ENCODE measurements at regions of chr1 and their contacts with region 1.

Region 1: GRCh38 chr1:161192476-161193465 is 6.1 kb downstream of the ADAMTS4 start:
- DNase-seq: peak; percentile 67 to 88 (median 78)
- H3K4me3 ChIP-seq: no peak overlapping the region
- H3K27ac ChIP-seq: peak overlapping the region in 2 of 5 donors; percentile 5 to 50
- H3K4me1 ChIP-seq: peaks cover 0 to 36% of the 10 kb centered on the region in 2 donors
- H3K27me3 ChIP-seq: no peaks in the 10 kb centered on the region
- CTCF ChIP-seq: peak; percentile 73 to 90 (median 87)
- POLR2A ChIP-seq: no peak

Region 2: DNA sequence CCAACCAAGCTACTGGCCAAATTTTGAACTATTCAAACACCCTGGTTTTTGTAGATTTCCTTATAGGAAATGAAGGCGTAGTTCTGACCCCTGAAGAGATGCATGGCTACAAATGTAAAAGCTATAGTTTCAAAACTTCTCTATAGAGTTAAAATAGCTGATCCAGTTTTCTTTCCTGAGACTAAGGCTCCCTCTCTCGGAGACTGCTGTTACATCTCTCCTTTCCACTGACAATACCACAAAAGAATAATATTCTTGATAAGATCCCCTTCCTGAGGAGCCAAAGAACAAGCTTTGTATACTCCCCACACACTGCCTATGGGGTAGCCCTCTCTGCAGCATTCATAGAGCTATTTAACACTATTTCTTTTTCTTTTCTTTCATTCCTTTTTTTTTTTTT is 181.6 kb after region 1 on chr1:
- intact Hi-C with region 1: loop called in 1 of 2 experiments (anchors 10 kb)
- DNase-seq: peak in 1 of 7 donors; percentile 1
- H3K4me3 ChIP-seq: no peak overlapping the region
- H3K27ac ChIP-seq: no peak overlapping the region
- H3K4me1 ChIP-seq: no peaks in the 10 kb centered on the region
- H3K27me3 ChIP-seq: no peaks in the 10 kb centered on the region
- CTCF ChIP-seq: peak in 5 of 6 experiments; percentile 10 to 42 (median 25)
- POLR2A ChIP-seq: no peak

Region 3: DNA sequence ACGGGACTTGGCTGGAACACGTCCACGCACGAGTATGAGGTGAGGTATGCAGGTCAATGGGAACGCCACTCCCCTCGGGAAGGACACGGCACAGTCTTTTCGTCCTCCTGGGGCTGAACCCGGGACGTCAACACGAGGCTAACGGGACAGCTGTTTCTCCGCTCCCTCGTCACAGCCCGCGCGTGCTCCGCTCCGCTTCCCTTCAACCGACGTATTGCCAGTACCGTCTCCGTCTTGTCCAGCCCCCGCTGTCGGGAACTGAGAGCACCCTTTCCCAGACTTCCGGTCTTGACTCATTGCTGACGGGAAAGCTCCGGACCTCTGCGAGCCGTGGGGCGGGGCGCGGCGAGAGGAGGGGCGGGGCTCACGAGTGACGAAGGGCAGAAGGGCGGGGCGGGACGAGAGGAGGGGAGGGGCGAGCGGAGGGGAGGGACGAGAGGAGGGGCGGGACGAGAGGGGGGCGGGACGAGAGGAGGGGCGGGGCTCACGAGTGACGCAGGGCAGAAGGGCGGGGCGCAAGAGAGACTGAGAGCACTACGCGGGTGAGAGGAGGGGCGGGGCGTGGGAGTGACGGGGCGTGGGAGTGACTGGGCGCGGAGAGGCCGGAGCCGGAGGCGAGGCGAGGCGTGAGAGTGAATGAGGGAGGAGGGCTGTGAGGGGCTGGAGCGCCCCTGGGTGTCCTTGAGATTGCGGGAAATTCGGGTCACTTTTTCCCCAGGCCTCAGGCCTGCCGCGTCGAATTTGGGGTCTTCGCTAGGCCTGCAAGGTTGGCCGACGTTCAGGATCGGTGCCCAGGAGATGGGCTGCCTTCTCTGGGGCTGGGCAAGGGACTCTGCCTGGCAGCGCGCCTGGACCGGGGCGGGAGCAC is 197.2 kb after region 1 on chr1:
- intact Hi-C with region 1: loop called in 1 of 2 experiments (anchors 10 kb)
- DNase-seq: peak; percentile 97 to 99 (median 99)
- H3K4me3 ChIP-seq: peak overlapping the region in 3 of 4 donors; percentile 48 to 68 (median 54)
- H3K27ac ChIP-seq: peak overlapping the region; percentile 60 to 93 (median 83)
- H3K4me1 ChIP-seq: peaks cover 10% of the 10 kb centered on the region in 2 donors
- H3K27me3 ChIP-seq: no peaks in the 10 kb centered on the region
- CTCF ChIP-seq: no peak
- POLR2A ChIP-seq: peak; percentile 86 to 95

Measured in adrenal gland (tissue), 19 donors.